ENCODE measurements at regions of chr15 and their contacts with region 1.

Region 1: GRCh38 chr15:67188551-67189218 is 65.8 kb downstream of the AAGAB start:
- DNase-seq: peak; percentile 85
- H3K4me3 ChIP-seq: no peak overlapping the region
- H3K27ac ChIP-seq: peak overlapping the region; percentile 69
- H3K4me1 ChIP-seq: peaks cover 22% of the 10 kb centered on the region
- H3K27me3 ChIP-seq: no peaks in the 10 kb centered on the region
- CTCF ChIP-seq: no peak

Region 2: DNA sequence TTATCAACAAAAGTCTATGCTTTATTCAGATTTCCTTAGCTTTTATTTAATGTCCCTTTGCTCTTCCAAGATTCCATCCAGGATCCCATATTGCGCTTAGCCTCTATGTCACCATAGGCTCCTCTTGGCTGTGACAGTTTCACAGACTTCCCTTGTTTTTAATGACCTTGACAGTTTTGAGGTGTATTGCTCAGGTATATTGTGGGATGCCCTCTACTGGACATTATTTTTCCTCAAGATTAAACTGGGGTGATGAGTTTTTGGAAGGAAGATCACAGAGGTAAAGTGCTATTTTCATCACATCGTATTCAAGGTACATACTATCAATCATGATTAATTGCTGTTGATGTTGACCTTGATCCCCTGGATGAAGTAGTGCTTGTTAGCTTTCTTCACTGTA is 222.4 kb before region 1 on chr15:
- CTCF ChIA-PET with region 1: no interaction called
- POLR2A ChIA-PET with region 1: no interaction called
- intact Hi-C with region 1: loop called (anchors 10 kb)
- DNase-seq: no peak
- H3K4me3 ChIP-seq: no peak overlapping the region
- H3K27ac ChIP-seq: no peak overlapping the region
- H3K4me1 ChIP-seq: no peaks in the 10 kb centered on the region
- H3K27me3 ChIP-seq: no peaks in the 10 kb centered on the region
- CTCF ChIP-seq: peak; percentile 31

Measured in A673 (cell line).